ENCODE measurements at regions of chr12 and their contacts with region 1.

Region 1: GRCh38 chr12:55142669-55143565 is 16.7 kb downstream of the OR9K2 start:
- DNase-seq: peak in 1 of 2 donors; percentile 24
- ATAC-seq: no peak
- H3K4me3 ChIP-seq: no peak overlapping the region
- H3K27ac ChIP-seq: no peak overlapping the region
- H3K4me1 ChIP-seq: no peaks in the 10 kb centered on the region
- H3K27me3 ChIP-seq: peaks cover 0 to 4% (median 0%) of the 10 kb centered on the region in 7 donors
- CTCF ChIP-seq: peak; percentile 25 to 77 (median 63)

Region 2: DNA sequence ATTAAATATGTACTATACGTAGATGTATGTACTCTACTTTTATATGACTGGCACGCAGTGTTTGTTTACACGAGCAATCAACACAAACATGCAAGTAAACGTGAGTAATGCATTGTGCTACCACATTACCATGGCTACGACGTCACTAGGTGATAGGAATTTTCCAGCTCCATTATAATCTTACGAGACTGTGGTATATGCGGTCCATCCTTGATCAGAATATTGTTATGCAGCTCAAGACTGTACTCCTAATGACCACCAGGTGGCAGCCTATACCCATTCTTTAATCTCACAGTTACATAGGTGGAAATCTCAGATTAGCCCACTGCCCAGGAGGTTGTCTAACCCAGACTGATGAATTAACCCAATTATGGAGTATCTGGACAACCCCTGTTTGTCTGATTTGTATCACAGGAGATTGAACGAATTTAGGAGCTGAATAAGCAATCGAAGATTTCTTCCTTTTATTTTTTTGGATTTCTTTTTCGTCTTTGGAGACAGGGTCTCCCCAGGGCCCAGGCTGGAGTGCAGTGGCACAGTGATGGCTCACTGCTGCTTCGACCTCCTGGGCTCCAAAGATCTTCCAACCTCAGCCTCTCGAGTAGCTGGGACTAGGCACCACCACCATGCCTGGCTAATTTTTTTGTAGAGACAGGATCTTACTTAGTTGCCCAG is 149.6 kb before region 1 on chr12:
- intact Hi-C with region 1: loop called in 8 of 10 experiments (anchors 2 to 10 kb)
- DNase-seq: peak in 1 of 2 donors; percentile 44
- ATAC-seq: peak in 6 of 8 donors; percentile 54 to 78 (median 60)
- H3K4me3 ChIP-seq: no peak overlapping the region
- H3K27ac ChIP-seq: no peak overlapping the region
- H3K4me1 ChIP-seq: peaks cover 0 to 23% (median 6%) of the 10 kb centered on the region in 9 donors
- H3K27me3 ChIP-seq: peaks cover 0 to 21% (median 6%) of the 10 kb centered on the region in 7 donors
- CTCF ChIP-seq: peak; percentile 81 to 92 (median 87)

Region 3: DNA sequence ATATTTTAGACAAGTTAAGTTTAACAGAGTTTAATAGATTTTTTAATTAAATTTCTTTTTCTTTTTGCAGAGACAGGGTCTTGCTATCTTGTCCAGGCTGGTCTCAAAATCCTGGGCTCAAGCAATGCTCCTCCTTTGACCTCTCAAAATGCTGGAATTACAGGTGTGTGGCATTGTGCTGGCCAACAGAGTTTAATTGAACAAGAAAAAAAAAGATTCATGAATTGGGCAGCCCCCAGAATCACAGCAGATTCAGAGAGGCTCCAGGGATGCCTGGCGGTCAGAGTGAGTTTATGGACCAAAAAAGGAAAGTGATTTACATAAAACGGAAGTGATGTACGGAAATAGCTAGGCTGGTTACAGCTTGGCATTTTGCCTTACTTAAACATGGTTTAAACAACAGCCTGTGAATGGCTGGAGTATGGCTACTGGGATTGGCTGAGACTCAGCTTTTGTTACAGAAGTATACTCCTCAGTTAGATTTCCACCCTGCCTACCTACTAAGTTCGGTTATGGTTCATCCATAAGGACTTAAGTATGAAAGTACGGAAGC is 143.9 kb before region 1 on chr12:
- intact Hi-C with region 1: loop called in 7 of 10 experiments (anchors 5 to 10 kb)
- DNase-seq: no peak
- ATAC-seq: no peak
- H3K4me3 ChIP-seq: no peak overlapping the region
- H3K27ac ChIP-seq: no peak overlapping the region
- H3K4me1 ChIP-seq: no peaks in the 10 kb centered on the region
- H3K27me3 ChIP-seq: peaks cover 0 to 35% (median 9%) of the 10 kb centered on the region in 7 donors
- CTCF ChIP-seq: no peak

Region 4: DNA sequence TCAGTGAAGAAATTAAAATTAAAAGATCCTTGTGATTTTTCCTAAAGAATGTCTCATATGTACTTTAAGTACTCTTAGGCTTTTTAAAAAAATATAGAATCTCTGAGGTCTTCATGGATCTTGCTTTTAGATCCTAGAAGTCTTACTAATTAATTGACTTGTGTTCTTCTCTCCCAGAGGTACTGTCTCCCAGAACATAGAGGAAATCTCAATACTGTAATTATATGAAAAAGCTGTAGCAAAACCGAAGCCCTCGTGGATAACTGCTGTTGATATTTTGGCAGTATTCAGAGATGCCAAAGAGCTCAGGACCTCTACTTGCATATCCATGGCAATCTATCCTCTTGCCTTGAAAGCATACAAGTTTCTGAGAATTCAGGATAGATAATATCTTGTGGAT is 16.8 kb before region 1 on chr12 and contains the start of gene OR9K2:
- intact Hi-C with region 1: no loop called
- DNase-seq: no peak
- ATAC-seq: no peak
- H3K4me3 ChIP-seq: no peak within 1 kb of the TSS
- H3K27ac ChIP-seq: no peak within 1 kb of the TSS
- H3K4me1 ChIP-seq: no peaks in the 10 kb centered on the region
- H3K27me3 ChIP-seq: peaks cover 0 to 18% (median under 1%) of the 10 kb centered on the region in 7 donors
- CTCF ChIP-seq: no peak
- total RNA-seq, gene OR9K2: not detected

Measured in heart right ventricle (tissue), 16 donors.